ENCODE measurements at regions of chr12 and their contacts with region 1.

Region 1: GRCh38 chr12:123278101-123278627 is 6.5 kb upstream of the CDK2AP1 start:
- DNase-seq: no peak
- H3K4me3 ChIP-seq: no peak overlapping the region
- H3K27me3 ChIP-seq: no peaks in the 10 kb centered on the region
- CTCF ChIP-seq: no peak

Region 2: DNA sequence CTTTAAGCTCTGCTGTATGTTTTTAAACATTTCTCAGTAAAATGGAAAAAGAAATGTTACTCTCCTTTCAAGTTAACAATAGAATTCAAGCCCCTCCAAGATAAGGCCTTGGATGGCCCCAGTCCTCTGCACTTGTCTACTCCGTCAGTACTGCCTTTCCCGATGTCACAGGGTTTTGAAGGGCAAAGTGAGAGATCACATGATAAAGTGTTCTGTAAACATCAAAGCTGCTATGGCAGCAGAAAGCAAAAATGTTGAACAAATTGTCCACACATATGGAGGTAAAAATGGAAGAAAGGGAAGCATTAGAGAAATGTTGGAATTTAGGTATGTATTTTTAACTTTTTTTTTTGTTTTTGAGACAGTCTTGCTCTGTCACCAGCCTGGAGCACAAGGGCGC is 27.0 kb after region 1 on chr12:
- CTCF ChIA-PET with region 1: no interaction called
- POLR2A ChIA-PET with region 1: interaction called, 16 read pairs
- DNase-seq: no peak
- H3K4me3 ChIP-seq: no peak overlapping the region
- H3K27me3 ChIP-seq: no peaks in the 10 kb centered on the region
- CTCF ChIP-seq: no peak

Region 3: GRCh38 chr12:123580772-123581171 is 302.6 kb after region 1 on chr12:
- CTCF ChIA-PET with region 1: no interaction called
- POLR2A ChIA-PET with region 1: interaction called, 12 read pairs
- DNase-seq: no peak
- H3K4me3 ChIP-seq: no peak overlapping the region
- H3K27me3 ChIP-seq: no peaks in the 10 kb centered on the region
- CTCF ChIP-seq: no peak